PC-9 (cell line): ENCODE measurements at regions of chr11 and their contacts with region 1.

Region 1: GRCh38 chr11:118907051-118908042 is 18.4 kb downstream of the BCL9L start:
- DNase-seq: peak; percentile 78 to 89
- H3K4me3 ChIP-seq: no peak overlapping the region
- H3K27ac ChIP-seq: peak overlapping the region; percentile 21; the same call in 1 of the 2 replicates
- H3K4me1 ChIP-seq: peaks cover 50% of the 10 kb centered on the region
- H3K27me3 ChIP-seq: no peaks in the 10 kb centered on the region
- CTCF ChIP-seq: peak; percentile 99

Region 2: GRCh38 chr11:118621071-118621783 is 286.1 kb before region 1 on chr11:
- CTCF ChIA-PET with region 1: no interaction called
- POLR2A ChIA-PET with region 1: interaction called, 3 read pairs
- intact Hi-C with region 1: loop called (anchors 1 kb)
- DNase-seq: peak; percentile 82 to 91
- H3K4me3 ChIP-seq: peak overlapping the region; percentile 67
- H3K27ac ChIP-seq: peak overlapping the region; percentile 79
- H3K4me1 ChIP-seq: peaks cover 62% of the 10 kb centered on the region
- H3K27me3 ChIP-seq: no peaks in the 10 kb centered on the region
- CTCF ChIP-seq: no peak

Region 3: DNA sequence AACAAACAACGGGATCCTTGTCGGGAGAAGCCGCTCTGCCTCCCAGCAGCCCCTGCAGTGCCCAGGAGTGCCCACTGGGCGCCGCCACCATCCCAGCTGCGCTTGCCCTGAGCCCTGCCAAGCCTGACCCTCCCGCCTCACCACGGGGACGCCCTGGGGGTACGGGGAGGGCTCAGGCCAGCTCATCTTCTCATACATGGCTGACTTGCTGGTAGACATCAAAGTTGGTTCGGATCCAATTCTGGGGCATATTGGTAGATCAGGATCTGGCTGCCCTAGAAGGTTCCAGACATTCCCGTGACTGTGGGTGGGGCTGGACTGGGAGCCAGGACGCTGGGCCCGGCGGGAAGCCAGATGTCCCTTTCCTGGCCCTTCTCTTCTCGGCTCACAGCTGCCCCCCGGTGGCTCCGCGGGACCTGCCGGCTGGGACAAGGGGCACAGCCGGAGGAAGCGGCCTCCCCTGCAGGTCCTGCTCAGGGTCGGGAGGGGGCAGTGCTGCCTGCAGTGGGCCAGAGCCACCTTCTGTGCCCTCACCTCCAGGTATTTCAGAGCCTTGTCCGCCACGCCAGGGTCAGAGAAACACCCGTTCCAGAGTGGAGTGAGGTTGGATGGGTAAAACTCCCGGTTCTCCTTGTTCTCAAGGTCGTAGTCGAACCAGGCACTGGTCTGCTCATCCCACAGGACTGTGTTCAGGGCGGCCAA is 217.3 kb before region 1 on chr11:
- CTCF ChIA-PET with region 1: no interaction called
- POLR2A ChIA-PET with region 1: no interaction called
- intact Hi-C with region 1: loop called (anchors 1 kb)
- DNase-seq: peak; percentile 82 to 92
- H3K4me3 ChIP-seq: peak overlapping the region; percentile 61
- H3K27ac ChIP-seq: no peak overlapping the region
- H3K4me1 ChIP-seq: peaks cover 5% of the 10 kb centered on the region
- H3K27me3 ChIP-seq: no peaks in the 10 kb centered on the region
- CTCF ChIP-seq: peak; percentile 91

Region 4: DNA sequence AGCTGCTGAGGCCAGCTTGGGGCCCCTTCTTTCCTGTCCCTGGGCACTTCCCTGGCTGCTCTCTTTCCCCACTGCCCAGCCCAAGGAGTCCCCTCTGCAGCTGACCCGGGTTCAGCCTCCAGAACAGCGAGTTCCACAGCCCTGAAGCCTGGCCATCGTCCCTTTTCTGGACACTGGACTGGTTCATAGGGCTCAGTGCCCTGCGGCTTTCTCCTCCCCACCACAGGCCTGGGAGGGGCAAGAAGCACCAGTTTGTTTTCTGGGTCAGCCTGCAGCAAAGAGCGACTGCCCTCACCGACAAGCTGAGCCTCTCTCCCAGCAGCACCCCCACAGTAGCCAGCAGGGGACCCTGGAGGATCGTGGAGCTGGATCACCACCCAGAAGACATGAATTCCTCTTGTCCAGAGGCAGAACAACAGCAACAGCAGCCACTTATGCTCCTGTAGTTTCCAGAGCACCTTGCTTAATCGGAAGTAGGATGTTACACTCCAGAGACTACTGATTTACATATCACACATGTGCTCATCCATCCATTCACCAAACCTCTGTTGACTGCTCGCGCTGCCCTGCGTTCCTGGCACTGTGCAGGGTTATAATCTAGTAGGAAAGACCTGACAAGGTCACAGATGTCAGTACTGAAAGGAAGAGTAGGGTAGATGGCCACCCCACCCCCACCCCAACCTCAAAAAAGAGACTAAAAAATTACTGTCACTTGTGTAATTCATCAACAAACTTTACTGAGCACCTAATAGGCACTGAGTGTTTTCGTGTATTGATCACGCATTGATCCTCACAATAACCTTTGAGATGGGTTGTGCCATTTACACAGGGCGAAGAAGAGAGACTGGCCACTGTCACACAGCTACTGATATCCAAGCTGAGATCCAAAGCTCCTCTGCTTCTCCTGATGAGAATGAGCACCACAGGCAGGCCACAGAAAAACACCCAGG is 36.7 kb before region 1 on chr11:
- CTCF ChIA-PET with region 1: no interaction called
- POLR2A ChIA-PET with region 1: no interaction called
- intact Hi-C with region 1: loop called (anchors 1 kb)
- DNase-seq: peak; percentile 64 to 67
- H3K4me3 ChIP-seq: peak overlapping the region; percentile 42; the same call in 1 of the 2 replicates
- H3K27ac ChIP-seq: peak overlapping the region; percentile 62
- H3K4me1 ChIP-seq: peaks cover 19% of the 10 kb centered on the region
- H3K27me3 ChIP-seq: no peaks in the 10 kb centered on the region
- CTCF ChIP-seq: no peak

Region 5: GRCh38 chr11:118928108-118928870 is 20.9 kb after region 1 on chr11:
- CTCF ChIA-PET with region 1: interaction called, 10 read pairs
- POLR2A ChIA-PET with region 1: interaction called, 39 read pairs
- intact Hi-C with region 1: loop called (anchors 1 kb)
- DNase-seq: peak; percentile 91 to 97
- H3K4me3 ChIP-seq: peak overlapping the region; percentile 84
- H3K27ac ChIP-seq: peak overlapping the region; percentile 64
- H3K4me1 ChIP-seq: peaks cover 32% of the 10 kb centered on the region
- H3K27me3 ChIP-seq: no peaks in the 10 kb centered on the region
- CTCF ChIP-seq: peak; percentile 99

Region 6: GRCh38 chr11:119067371-119068222 is 160.2 kb after region 1 on chr11 and contains the start of gene VPS11:
- CTCF ChIA-PET with region 1: no interaction called
- POLR2A ChIA-PET with region 1: interaction called, 20 read pairs
- intact Hi-C with region 1: no loop called
- DNase-seq: peak; percentile 95 to 96
- H3K4me3 ChIP-seq: peak within 1 kb of the TSS; percentile 89
- H3K27ac ChIP-seq: peak within 1 kb of the TSS; percentile 55
- H3K4me1 ChIP-seq: peaks cover 8% of the 10 kb centered on the region
- H3K27me3 ChIP-seq: no peaks in the 10 kb centered on the region
- CTCF ChIP-seq: 0 out of 2 replicates have a peak, but pooled peaks have one; percentile 14
- total RNA-seq, gene VPS11: 21.1 and 22.9 TPM in 2 replicates

Region 7: GRCh38 chr11:119474682-119475596 is 567.6 kb after region 1 on chr11:
- CTCF ChIA-PET with region 1: no interaction called
- POLR2A ChIA-PET with region 1: no interaction called
- intact Hi-C with region 1: loop called (anchors 5 kb)
- DNase-seq: peak; percentile 64 to 75
- H3K4me3 ChIP-seq: no peak overlapping the region
- H3K27ac ChIP-seq: peak overlapping the region; percentile 34; the same call in 1 of the 2 replicates
- H3K4me1 ChIP-seq: peaks cover 19% of the 10 kb centered on the region
- H3K27me3 ChIP-seq: no peaks in the 10 kb centered on the region
- CTCF ChIP-seq: peak; percentile 98